Right ventricle myocardium inferior (tissue), 1 donor: ENCODE measurements at regions of chr14 and their contacts with region 1.

Region 1: DNA sequence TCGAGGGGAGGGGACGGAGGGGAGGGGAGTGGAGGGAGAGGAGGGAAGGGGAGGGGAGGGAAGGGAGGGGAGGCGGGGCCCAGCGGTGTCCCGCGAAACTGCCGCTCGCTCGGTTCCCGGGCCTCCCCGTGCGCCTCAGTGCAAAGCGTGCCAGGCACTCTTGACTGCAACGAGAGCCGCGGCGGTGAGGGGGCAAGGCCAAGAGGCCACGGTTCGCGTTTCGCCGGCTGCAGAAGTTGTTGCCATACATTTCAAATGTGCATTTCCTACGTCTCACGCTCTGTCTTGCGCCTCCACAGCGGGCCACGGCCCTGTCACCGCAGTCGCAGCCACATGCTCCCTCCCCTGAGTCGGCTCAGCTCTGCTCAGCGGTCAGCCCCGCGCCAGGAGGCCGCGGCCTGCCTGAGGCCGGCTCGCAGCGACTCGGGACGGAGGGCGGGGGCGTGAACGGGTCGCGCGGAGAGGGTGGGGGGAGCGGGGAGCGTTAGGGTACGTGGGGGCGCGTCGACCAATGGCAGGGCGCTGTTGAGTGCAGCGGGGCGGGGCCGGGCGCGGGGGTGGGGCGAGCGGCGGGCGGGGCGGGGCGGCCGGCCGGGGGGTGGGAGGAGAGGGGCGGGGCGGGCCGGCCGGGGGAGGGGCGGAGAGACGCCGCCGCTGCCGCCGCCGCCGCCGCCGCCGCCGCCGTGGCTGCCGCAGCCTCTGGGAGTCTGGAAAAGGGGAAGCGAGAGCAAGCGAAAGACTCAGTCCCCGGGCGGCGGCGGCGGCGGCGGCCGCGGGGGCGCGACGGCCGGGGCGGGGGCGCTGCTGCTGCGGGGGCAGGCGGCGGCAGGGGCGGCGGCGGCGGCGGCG is at the start of gene PPP2R5C:
- DNase-seq: peak; percentile 96
- ATAC-seq: peak; percentile 89
- total RNA-seq, gene PPP2R5C: 199 TPM

Region 2: DNA sequence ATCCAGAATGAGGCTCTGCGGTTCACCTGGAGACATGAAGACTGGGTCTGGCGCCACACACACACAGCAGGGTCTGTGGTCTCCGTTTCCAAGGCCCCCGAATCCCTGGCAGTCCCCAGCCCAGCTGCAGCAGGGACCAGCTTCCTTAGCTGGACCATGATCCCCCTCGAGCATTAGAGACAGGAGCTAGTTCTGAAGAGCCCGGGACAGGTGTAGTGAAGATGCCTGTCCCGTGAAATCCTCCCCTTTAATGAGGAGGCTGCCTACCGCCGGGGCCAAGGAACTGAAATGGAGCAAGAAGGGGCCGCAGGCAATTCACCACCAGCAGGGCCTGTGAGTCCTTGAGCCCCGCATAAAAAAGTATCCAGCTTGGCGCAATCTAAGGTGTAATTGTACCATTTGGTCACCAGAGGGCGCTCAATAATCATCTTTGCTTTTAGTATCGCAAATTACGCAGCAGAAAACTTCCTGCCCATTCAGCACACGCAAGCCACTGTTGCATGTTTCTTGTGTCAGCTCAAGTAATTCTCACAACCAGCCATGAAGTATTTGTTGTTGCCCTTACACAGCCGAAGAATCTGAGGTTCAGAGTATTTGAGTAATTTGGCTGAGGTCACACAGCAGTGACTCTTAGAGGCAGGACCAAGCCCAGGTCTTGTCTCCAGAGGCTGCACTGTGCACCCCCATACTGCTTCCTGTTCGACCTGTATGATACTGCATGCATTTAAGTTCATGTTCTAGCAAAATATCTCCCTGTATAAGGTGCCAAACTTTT is 54.0 kb before region 1 on chr14:
- intact Hi-C with region 1: loop called (anchors 2 kb)
- DNase-seq: no peak
- ATAC-seq: peak; percentile 66

Region 3: GRCh38 chr14:101903111-101903561 is 141.9 kb after region 1 on chr14:
- intact Hi-C with region 1: loop called (anchors 5 kb)
- DNase-seq: peak; percentile 86
- ATAC-seq: peak; percentile 93

Region 4: GRCh38 chr14:101947906-101948665 is 186.8 kb after region 1 on chr14:
- intact Hi-C with region 1: loop called (anchors 1 kb)
- DNase-seq: peak; percentile 100
- ATAC-seq: peak; percentile 99

Region 5: GRCh38 chr14:101964297-101965144 is 203.3 kb after region 1 on chr14 and contains the start of gene DYNC1H1:
- intact Hi-C with region 1: loop called (anchors 2 kb)
- DNase-seq: peak; percentile 98
- ATAC-seq: peak; percentile 93
- total RNA-seq, gene DYNC1H1: 348 TPM

Region 6: DNA sequence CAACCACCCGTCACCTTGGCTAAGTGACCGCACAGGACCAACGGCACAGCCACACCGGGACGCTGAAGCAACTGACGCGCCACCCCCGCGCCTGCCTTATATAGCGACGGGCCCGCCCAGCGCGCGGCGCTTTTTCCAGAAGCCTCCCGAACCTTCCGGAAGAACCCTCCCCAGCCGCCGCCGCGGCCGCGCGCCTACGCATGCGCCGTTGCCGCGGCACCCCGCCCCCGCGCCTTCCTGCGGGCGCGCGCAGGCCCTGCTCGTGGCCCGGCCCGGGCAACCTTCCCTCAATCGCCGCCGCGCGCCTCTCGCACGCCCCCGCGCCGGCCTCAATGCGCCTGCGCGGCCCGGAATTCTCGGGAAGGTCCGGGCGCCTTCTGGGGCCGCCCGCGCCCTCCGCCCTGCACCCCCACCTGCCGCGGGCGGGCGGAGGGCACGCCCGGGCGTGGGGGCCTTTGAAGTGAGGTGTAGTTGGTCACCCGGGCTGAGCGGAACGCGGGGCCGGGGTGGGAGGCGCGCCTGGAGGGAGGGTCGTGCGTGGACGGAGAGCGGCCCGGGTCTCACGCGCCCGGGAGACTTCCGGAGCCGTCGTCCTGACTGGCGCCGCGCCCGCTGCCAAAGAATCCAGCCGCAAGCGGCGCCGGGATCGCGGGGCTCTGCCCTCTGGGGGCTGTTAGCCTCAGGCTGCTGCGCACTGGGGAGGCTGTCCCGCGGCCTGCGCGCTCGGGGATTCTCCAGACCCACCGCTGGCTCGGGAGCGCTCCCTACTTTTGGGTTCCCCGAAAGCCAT is 325.9 kb after region 1 on chr14 and contains the start of gene HSP90AA1:
- intact Hi-C with region 1: loop called (anchors 2 kb)
- DNase-seq: peak; percentile 97
- ATAC-seq: peak; percentile 91
- total RNA-seq, gene HSP90AA1: 484 TPM